ENCODE measurements at regions of chr1 and their contacts with region 1.

Region 1: GRCh38 chr1:88746916-88747315 is 62.8 kb downstream of the PKN2 start:
- DNase-seq: no peak
- H3K4me3 ChIP-seq: no peak overlapping the region
- H3K27ac ChIP-seq: no peak overlapping the region
- H3K4me1 ChIP-seq: no peaks in the 10 kb centered on the region
- H3K27me3 ChIP-seq: no peaks in the 10 kb centered on the region
- CTCF ChIP-seq: no peak

Region 2: GRCh38 chr1:88708021-88708420 is 38.9 kb before region 1 on chr1:
- CTCF ChIA-PET with region 1: no interaction called
- POLR2A ChIA-PET with region 1: no interaction called
- intact Hi-C with region 1: no loop called
- DNase-seq: peak in 1 of 2 experiments; percentile 88
- H3K4me3 ChIP-seq: peak overlapping the region; percentile 3; the same call in 1 of the 2 replicates
- H3K27ac ChIP-seq: peak overlapping the region; percentile 11; the same call in 1 of the 2 replicates
- H3K4me1 ChIP-seq: peaks cover 24% of the 10 kb centered on the region
- H3K27me3 ChIP-seq: no peaks in the 10 kb centered on the region
- CTCF ChIP-seq: no peak

Region 3: GRCh38 chr1:88784551-88784950 is 37.6 kb after region 1 on chr1:
- CTCF ChIA-PET with region 1: interaction called, 14 read pairs
- POLR2A ChIA-PET with region 1: no interaction called
- intact Hi-C with region 1: no loop called
- DNase-seq: no peak
- H3K4me3 ChIP-seq: no peak overlapping the region
- H3K27ac ChIP-seq: no peak overlapping the region
- H3K4me1 ChIP-seq: no peaks in the 10 kb centered on the region
- H3K27me3 ChIP-seq: no peaks in the 10 kb centered on the region
- CTCF ChIP-seq: no peak

Measured in PC-9 (cell line).